Dendritic cell treated with granulocyte-macrophage colony-stimulating factor and Interleukin-4, amounts not matched to agents 40 ng/mL and 50 ng/mL, for 4 days (primary cell): ENCODE measurements at regions of chr9 and their contacts with region 1.

Region 1: DNA sequence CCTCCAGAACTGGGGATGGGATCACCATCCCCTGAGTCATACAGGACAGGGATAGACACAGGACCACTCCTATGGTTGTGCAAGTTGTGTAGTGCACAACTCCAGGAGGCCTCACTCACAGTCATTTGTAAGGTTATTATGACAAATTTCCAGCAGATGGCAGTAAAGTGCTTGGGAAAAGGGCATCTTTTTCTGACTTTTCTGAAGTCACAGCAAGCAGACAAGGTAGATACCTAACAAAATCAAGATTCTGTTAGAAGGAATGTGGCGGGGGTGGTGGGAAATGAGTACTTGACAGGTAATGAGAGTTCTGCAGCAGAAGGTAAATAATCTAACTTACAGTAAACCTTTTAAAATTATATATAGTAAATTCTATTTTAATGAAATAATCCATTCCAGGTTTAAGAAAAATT is 16.7 kb upstream of the KIF27 start:
- H3K4me3 Mint-ChIP-seq: no peak overlapping the region
- H3K27ac Mint-ChIP-seq: no peak overlapping the region
- H3K4me1 Mint-ChIP-seq: peaks cover 17% of the 10 kb centered on the region
- H3K27me3 Mint-ChIP-seq: no peaks in the 10 kb centered on the region

Region 2: GRCh38 chr9:82894961-82895821 is 1042.7 kb before region 1 on chr9:
- intact Hi-C with region 1: no loop called
- H3K4me3 Mint-ChIP-seq: no peak overlapping the region
- H3K27ac Mint-ChIP-seq: no peak overlapping the region
- H3K4me1 Mint-ChIP-seq: no peaks in the 10 kb centered on the region
- H3K27me3 Mint-ChIP-seq: no peaks in the 10 kb centered on the region

Region 3: DNA sequence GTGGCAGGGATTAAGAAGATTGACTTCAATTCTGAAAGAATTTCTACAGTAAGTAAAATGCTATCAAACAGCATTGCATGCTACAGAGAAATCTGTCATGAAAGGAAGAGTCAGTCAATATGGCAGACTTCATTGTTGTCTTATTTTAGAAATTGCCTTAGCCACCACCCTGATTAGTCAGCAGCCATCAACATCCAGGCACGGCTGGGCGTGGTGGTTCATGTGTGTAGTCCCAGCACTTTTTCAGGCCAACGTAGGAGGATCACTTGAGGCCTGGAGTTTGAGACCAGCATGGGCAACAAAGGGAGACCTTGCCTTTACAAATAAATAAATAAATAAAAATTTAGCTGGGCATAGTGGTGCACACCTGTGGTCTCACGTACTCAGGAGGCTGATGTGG is 89.3 kb after region 1 on chr9:
- intact Hi-C with region 1: no loop called
- H3K4me3 Mint-ChIP-seq: no peak overlapping the region
- H3K27ac Mint-ChIP-seq: no peak overlapping the region
- H3K4me1 Mint-ChIP-seq: peaks cover 5% of the 10 kb centered on the region
- H3K27me3 Mint-ChIP-seq: peaks cover 1% of the 10 kb centered on the region

Region 4: GRCh38 chr9:84173404-84173704 is 235.4 kb after region 1 on chr9:
- intact Hi-C with region 1: loop called (anchors 1 kb)
- H3K4me3 Mint-ChIP-seq: no peak overlapping the region
- H3K27ac Mint-ChIP-seq: no peak overlapping the region
- H3K4me1 Mint-ChIP-seq: peaks cover 6% of the 10 kb centered on the region
- H3K27me3 Mint-ChIP-seq: no peaks in the 10 kb centered on the region

Region 5: DNA sequence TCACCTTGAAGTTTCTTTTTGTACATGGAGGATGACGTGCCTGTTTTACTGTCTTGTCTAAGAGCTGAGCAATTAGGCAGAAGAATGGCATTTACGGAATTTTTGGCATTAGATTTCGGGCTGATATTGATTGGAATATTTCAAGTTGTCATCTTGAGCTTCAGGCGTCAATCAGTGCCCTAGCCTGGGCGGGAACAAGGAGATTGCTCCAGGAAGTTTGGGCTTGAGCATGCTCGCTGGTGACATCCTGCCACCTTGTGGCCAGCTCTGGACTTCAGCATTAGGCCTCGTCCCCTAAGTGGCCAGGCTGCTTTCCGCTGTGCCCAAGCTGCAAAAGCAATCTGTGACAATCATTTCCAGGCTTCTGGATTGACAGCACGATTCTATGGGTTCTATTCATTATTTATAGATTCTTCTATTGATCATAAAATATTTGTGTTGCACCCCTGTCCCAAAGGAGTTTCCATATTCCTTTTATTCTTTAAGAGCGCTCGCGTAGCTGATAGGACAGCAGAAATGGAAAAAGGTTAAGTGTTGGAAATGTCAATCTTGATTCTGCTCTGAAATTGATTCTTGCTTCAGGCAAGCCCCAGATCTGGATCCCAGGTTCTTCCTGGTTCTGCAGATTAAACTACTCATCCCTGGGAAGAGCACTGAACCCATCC is 323.3 kb after region 1 on chr9:
- intact Hi-C with region 1: loop called (anchors 1 kb)
- H3K4me3 Mint-ChIP-seq: peak overlapping the region; percentile 34
- H3K27ac Mint-ChIP-seq: no peak overlapping the region
- H3K4me1 Mint-ChIP-seq: peaks cover 8% of the 10 kb centered on the region
- H3K27me3 Mint-ChIP-seq: peaks cover 3% of the 10 kb centered on the region

Region 6: DNA sequence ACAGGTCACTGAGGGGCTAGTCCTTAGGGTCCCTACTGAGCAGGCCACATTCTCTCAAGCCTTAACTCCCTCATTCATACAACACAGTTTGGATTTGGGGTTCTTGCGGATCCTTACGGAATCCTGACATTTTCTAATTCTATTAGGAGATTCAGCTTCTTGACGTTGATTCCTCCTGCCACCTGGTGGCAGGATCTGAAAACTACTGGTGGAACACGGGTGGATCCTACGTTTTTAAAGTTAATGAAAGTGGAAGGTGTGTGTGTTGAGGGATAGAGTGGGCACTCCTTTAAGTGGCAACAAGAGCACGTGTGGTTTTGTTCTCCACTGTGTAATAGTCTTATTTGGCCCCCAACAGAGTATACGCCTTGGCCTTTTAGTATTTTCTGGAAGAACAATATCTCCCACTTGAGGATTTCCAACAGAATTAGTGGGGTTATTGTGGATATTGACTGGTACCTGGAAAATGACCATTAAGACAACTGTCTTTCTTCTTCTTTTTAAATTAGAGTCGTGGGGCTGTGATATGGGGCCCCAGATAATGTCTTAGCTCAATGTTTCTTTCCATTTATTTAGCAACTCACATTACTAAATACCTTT is 377.5 kb after region 1 on chr9:
- intact Hi-C with region 1: loop called (anchors 1 kb)
- H3K4me3 Mint-ChIP-seq: no peak overlapping the region
- H3K27ac Mint-ChIP-seq: no peak overlapping the region
- H3K4me1 Mint-ChIP-seq: peaks cover 19% of the 10 kb centered on the region
- H3K27me3 Mint-ChIP-seq: no peaks in the 10 kb centered on the region